ENCODE measurements at regions of chr19 and their contacts with region 1.

Region 1: GRCh38 chr19:11558881-11559828 is at the start of gene ELOF1:
- DNase-seq: peak; percentile 98
- H3K4me3 Mint-ChIP-seq: peak within 1 kb of the TSS; percentile 91
- H3K27ac Mint-ChIP-seq: peak within 1 kb of the TSS; percentile 89
- H3K4me1 Mint-ChIP-seq: peaks cover 43% of the 10 kb centered on the region
- H3K27me3 Mint-ChIP-seq: no peaks in the 10 kb centered on the region
- total RNA-seq, gene ELOF1: 33.0 to 33.4 TPM

Region 2: DNA sequence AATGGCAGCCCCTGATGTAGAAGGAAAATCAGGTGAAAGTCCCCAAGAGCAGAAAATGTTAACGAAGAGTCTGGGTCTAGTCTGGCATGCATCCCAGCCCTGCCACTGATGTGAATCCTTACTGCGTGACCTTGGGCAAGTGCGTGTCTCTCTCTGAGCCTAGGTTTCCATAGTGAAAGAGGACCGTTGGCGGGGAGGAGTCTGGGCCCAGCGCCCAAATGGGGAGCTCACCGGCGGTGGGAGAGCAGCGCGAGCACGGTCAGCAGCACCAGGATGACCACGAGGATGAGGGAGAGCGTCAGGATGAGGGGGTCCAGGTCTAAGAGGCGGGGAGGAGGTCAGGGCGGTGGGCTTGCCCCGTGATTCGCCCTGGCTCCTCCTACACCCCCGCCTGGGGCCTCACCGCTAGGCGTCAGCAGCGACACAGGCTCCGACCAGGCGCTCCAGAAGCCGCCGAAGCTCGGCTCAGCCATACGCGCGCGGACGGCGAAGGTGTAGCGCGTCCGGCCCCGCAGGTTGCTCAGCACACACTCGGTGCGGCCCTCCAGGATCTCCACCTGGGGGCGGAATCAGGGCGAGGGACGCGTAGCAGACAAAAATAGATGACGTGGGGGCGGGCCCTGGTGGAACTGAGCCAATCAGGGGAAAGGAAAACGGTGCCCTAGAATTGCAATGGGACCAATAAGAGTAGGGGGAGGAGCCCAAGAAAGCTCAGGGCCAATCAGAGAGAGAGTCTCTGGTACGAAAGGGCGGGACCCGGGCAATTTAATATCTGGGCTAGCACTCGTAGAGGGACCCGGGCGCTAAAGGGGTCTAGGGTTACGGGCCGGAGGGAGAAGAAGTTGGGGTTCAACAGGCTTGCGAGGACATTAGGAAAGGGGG is 178.3 kb before region 1 on chr19:
- CTCF ChIA-PET with region 1: no interaction called
- intact Hi-C with region 1: loop called (anchors 1 kb)
- DNase-seq: peak; percentile 98
- H3K4me3 Mint-ChIP-seq: peak overlapping the region; percentile 85
- H3K27ac Mint-ChIP-seq: peak overlapping the region; percentile 92
- H3K4me1 Mint-ChIP-seq: peaks cover 52% of the 10 kb centered on the region
- H3K27me3 Mint-ChIP-seq: peaks cover 8% of the 10 kb centered on the region

Region 3: DNA sequence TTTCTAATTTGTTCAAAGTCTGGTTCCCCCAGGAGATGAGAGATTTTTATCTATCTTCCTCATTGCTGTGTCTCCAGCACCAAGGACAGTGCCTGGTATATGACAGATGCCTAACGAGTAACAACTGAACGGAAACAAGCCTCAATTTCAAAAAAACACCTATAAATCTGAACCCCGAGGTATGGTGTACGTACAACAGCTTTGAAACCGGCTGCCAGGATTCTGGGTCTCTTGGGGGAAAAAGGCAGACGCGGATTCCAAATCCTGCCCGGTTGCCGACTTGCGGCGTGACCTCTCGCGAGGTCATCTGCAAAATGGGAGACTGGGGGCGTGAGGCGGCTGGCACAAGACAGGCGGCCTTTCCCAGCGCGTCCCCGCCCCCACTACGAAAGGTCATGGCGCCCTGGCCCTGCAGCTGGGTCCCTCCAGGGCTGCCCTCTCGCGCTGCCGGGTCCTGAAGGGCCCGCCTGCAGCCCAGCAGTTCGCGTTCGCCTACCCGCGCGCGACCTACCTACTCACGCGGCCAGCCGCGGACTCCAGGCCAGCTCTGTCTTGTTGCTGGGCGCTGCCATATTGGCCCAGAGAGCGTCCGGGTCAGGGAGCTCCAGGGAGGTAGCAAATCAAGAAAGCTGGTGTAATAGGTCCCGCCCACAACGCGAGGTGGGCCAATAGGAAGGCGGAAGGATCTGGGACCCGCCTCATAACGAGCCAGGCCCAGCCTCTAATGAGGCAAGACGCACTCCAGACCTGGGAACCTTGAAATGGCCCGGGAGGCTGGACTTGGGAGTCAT is 30.4 kb before region 1 on chr19 and contains the start of gene ECSIT:
- CTCF ChIA-PET with region 1: interaction called, 5 read pairs
- intact Hi-C with region 1: loop called (anchors 2 kb)
- DNase-seq: peak; percentile 97
- H3K4me3 Mint-ChIP-seq: peak within 1 kb of the TSS; percentile 97
- H3K27ac Mint-ChIP-seq: peak within 1 kb of the TSS; percentile 90
- H3K4me1 Mint-ChIP-seq: peaks cover 26% of the 10 kb centered on the region
- H3K27me3 Mint-ChIP-seq: no peaks in the 10 kb centered on the region
- total RNA-seq, gene ECSIT: 42.6 to 46.0 TPM

Region 4: GRCh38 chr19:11581740-11582139 is 22.6 kb after region 1 on chr19:
- CTCF ChIA-PET with region 1: interaction called, 60 read pairs
- intact Hi-C with region 1: loop called (anchors 1 kb)
- DNase-seq: peak; percentile 82
- H3K4me3 Mint-ChIP-seq: peak overlapping the region; percentile 51
- H3K27ac Mint-ChIP-seq: peak overlapping the region; percentile 95
- H3K4me1 Mint-ChIP-seq: peaks cover 29% of the 10 kb centered on the region
- H3K27me3 Mint-ChIP-seq: no peaks in the 10 kb centered on the region

Region 5: DNA sequence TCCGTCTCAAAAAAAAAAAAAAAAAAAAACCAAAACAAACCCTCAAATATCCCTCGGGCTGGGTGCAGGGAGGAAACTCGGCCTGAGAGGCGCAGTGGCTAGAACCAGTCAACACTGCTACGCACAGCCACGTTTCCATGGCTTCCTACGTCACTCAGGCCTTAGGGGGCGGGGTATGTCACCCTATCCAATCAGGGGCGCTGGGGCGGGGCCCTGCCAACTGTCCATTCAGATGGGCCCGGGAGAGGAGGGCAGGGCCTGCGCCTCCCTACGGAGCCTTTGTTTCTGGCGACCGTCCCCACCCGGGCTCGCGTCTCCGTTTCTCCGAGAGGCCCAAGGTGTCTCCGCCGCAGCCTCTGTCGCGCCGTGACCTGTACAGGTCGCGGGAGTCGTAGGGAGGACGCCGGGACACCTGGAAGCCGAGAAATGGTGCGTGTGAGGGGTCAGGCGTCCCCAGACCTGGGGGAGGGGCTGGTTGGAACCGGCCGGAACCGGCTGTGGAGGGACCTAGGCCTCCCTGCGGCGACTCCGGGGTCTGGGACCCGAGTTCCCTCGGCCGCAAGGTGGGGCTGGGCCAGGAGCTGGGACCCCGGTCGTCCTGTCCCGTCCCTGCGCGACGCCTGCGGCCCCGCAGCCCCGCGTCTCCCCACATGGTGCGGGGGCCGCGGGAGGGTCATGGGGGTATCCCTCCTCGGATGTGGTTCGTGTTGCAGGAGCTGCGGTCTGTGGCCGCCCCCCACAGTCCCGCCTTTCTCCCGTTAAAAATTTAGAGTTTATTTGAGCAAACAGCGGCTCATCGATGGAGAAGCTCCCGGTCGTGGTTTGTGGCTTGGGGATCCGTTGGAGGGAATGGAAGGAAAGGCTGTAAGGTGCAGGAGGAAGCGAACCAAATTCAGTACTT is 38.3 kb after region 1 on chr19 and contains the start of gene ZNF627:
- CTCF ChIA-PET with region 1: interaction called, 30 read pairs
- intact Hi-C with region 1: loop called (anchors 1 kb)
- DNase-seq: peak; percentile 100
- H3K4me3 Mint-ChIP-seq: peak within 1 kb of the TSS; percentile 85
- H3K27ac Mint-ChIP-seq: peak within 1 kb of the TSS; percentile 70
- H3K4me1 Mint-ChIP-seq: peaks cover 33% of the 10 kb centered on the region
- H3K27me3 Mint-ChIP-seq: no peaks in the 10 kb centered on the region
- total RNA-seq, gene ZNF627: 4.3 to 5.0 TPM